GM18951 (cell line): ENCODE measurements at regions of chr12 and their contacts with region 1.

Region 1: GRCh38 chr12:25005376-25005775 is 56.5 kb upstream of the BCAT1 start:
- POLR2A ChIP-seq: no peak

Region 2: DNA sequence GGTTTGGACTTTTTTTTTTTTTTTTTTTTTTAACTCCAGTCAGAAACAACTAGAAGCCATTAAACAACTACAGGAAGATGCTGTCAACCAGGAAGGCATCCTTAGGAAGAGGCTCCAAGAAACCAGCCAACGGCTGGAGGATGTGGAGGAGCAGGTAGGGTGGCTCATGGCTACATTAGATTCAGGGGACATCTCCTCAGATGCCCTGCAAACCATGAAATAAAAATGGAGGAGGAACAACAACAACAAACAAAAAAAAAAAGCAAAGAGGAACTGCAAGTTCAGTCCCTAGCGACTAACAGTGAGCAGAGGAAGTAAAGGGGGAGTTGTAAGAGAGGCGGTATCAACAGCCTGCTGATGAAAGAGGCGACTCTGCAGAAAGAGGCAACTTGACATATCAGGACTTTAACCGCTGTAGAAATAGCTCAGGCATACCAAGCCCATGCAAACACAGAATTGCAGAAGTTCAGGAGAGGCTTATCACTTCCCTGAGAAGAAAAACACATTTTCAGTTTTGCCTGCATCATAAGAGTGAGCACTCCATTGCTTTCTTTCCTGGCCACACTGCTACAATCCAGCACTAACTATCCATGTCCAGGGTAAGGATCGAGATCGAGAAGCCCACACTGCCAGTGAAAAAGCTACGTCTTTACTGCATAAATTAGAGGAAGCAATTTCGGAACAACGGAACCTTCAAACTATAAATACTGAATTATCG is 47.0 kb after region 1 on chr12:
- in situ Hi-C with region 1: loop called (anchors 10 kb)
- POLR2A ChIP-seq: peak; percentile 62